ENCODE measurements at regions of chr1 and their contacts with region 1.

Region 1: DNA sequence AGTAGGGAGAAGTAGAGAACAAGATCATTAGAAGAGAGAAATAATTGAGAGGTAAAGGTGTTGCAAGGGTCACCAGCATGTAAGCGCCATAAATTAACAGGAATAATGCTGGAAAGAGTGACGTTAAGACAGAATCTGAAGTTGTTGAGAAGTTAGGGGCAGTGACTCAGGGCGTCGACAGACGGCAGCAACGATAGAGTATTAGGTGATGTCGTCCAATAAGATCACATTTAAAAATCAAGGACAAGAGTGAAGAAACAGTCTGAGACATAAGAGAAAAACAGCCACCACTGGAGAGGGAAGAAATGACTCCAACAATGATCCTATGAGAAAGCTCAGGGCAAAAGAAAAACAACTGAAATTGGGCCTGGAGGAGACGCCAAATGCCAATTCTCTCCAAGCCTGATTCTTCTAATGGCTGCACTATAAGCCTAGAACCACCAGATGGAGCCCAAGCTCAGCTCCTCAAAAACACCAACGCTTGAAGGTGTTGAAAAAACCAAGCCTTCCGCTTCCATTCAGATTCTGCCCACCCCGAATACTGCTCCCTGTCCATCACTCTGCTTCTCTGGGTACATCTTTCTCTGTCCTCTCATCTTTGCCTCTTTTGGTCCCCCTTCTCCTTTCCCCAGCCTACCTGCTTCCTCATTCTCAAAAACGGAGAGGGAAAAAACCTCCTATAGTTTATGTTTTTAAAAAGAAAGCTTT is 70.0 kb downstream of the LUZP1 start:
- DNase-seq: peak; percentile 81
- H3K4me3 ChIP-seq: no peak overlapping the region
- H3K27ac ChIP-seq: peak overlapping the region in 2 of 4 donors; percentile 22 to 61
- H3K4me1 ChIP-seq: peaks cover 0 to 48% (median 42%) of the 10 kb centered on the region in 4 donors
- H3K27me3 ChIP-seq: no peaks in the 10 kb centered on the region
- CTCF ChIP-seq: peak; percentile 87 to 97 (median 92)
- EP300 ChIP-seq: no peak
- POLR2A ChIP-seq: no peak

Region 2: DNA sequence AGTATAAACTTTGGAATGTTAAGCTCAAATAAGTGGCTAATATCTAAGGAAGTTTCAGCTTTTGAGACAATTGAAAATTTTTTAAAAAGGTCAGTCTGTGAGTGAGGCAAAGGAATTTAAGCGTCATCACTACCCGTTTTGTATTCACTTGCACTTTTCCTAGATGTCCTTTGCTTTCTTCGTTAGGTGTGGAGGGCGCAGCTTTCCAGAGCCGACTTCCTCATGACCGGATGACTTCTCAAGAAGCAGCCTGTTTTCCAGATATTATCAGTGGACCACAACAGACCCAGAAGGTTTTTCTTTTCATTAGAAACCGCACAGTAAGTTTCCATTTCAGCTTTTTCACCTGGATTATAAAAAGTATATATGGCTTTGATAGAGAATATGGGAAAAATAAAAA is 48.4 kb before region 1 on chr1:
- intact Hi-C with region 1: no loop called
- DNase-seq: no peak
- H3K4me3 ChIP-seq: no peak overlapping the region
- H3K27ac ChIP-seq: no peak overlapping the region
- H3K4me1 ChIP-seq: peaks cover 0 to 14% (median 7%) of the 10 kb centered on the region in 4 donors
- H3K27me3 ChIP-seq: no peaks in the 10 kb centered on the region
- CTCF ChIP-seq: no peak
- EP300 ChIP-seq: no peak
- POLR2A ChIP-seq: no peak

Region 3: GRCh38 chr1:23184212-23184934 is 85.8 kb after region 1 on chr1:
- intact Hi-C with region 1: loop called (anchors 1 kb)
- DNase-seq: no peak
- H3K4me3 ChIP-seq: peak overlapping the region in 3 of 4 donors; percentile 26 to 39 (median 35)
- H3K27ac ChIP-seq: no peak overlapping the region
- H3K4me1 ChIP-seq: peaks cover 0 to 7% (median 2%) of the 10 kb centered on the region in 4 donors
- H3K27me3 ChIP-seq: no peaks in the 10 kb centered on the region
- CTCF ChIP-seq: peak; percentile 81 to 92 (median 85)
- EP300 ChIP-seq: no peak
- POLR2A ChIP-seq: no peak

Region 4: GRCh38 chr1:23273450-23274133 is 175.0 kb after region 1 on chr1:
- intact Hi-C with region 1: loop called (anchors 10 kb)
- DNase-seq: no peak
- H3K4me3 ChIP-seq: no peak overlapping the region
- H3K27ac ChIP-seq: no peak overlapping the region
- H3K4me1 ChIP-seq: no peaks in the 10 kb centered on the region
- H3K27me3 ChIP-seq: peaks cover 0 to 42% (median 6%) of the 10 kb centered on the region in 3 donors
- CTCF ChIP-seq: no peak
- EP300 ChIP-seq: no peak
- POLR2A ChIP-seq: no peak

Measured in sigmoid colon (tissue), 7 donors.